ENCODE measurements at regions of chr6 and their contacts with region 1.

Region 1: GRCh38 chr6:26156076-26156849 is 69.0 kb downstream of the HFE start:
- DNase-seq: peak; percentile 90
- H3K4me3 Mint-ChIP-seq: peak overlapping the region; percentile 92
- H3K27ac Mint-ChIP-seq: peak overlapping the region; percentile 97
- H3K4me1 Mint-ChIP-seq: peaks cover 39% of the 10 kb centered on the region
- H3K27me3 Mint-ChIP-seq: peaks cover 3% of the 10 kb centered on the region

Region 2: GRCh38 chr6:25899123-25899522 is 257.1 kb before region 1 on chr6:
- CTCF ChIA-PET with region 1: no interaction called
- POLR2A ChIA-PET with region 1: no interaction called
- DNase-seq: no peak
- H3K4me3 Mint-ChIP-seq: no peak overlapping the region
- H3K27ac Mint-ChIP-seq: no peak overlapping the region
- H3K4me1 Mint-ChIP-seq: no peaks in the 10 kb centered on the region
- H3K27me3 Mint-ChIP-seq: no peaks in the 10 kb centered on the region

Region 3: GRCh38 chr6:26025894-26026832 is 130.1 kb before region 1 on chr6:
- CTCF ChIA-PET with region 1: interaction called, 5 read pairs
- POLR2A ChIA-PET with region 1: interaction called, 45 read pairs
- DNase-seq: peak; percentile 96
- H3K4me3 Mint-ChIP-seq: peak overlapping the region; percentile 88
- H3K27ac Mint-ChIP-seq: peak overlapping the region; percentile 100
- H3K4me1 Mint-ChIP-seq: peaks cover 86% of the 10 kb centered on the region
- H3K27me3 Mint-ChIP-seq: peaks cover 3% of the 10 kb centered on the region

Region 4: DNA sequence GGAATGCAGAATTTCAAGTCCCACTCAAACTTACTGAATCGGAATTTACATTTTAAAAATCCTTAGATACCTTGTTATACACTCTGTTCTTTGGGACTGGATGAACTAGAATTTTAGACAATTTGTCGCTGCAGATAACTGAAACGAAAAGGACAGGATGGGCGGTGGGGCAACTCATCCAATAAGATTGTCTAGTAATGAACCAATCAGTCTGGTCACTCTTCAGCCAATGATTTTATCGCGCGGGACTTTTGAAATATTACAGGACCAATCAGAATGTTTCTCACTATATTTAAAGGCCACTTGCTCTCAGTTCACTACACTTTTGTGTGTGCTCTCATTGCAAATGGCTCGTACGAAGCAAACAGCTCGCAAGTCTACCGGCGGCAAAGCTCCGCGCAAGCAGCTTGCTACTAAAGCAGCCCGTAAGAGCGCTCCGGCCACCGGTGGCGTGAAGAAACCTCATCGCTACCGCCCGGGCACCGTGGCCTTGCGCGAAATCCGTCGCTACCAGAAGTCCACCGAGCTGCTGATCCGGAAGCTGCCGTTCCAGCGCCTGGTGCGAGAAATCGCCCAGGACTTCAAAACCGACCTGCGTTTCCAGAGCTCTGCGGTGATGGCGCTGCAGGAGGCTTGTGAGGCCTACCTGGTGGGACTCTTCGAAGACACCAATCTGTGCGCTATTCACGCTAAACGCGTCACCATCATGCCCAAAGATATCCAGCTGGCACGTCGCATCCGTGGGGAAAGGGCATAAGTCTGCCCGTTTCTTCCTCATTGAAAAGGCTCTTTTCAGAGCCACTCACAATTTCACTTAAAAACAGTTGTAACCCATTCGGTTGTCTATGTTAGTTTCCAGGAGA is 111.0 kb before region 1 on chr6:
- CTCF ChIA-PET with region 1: no interaction called
- POLR2A ChIA-PET with region 1: interaction called, 15 read pairs
- DNase-seq: peak; percentile 93
- H3K4me3 Mint-ChIP-seq: peak overlapping the region; percentile 83
- H3K27ac Mint-ChIP-seq: peak overlapping the region; percentile 99
- H3K4me1 Mint-ChIP-seq: peaks cover 44% of the 10 kb centered on the region
- H3K27me3 Mint-ChIP-seq: no peaks in the 10 kb centered on the region

Region 5: DNA sequence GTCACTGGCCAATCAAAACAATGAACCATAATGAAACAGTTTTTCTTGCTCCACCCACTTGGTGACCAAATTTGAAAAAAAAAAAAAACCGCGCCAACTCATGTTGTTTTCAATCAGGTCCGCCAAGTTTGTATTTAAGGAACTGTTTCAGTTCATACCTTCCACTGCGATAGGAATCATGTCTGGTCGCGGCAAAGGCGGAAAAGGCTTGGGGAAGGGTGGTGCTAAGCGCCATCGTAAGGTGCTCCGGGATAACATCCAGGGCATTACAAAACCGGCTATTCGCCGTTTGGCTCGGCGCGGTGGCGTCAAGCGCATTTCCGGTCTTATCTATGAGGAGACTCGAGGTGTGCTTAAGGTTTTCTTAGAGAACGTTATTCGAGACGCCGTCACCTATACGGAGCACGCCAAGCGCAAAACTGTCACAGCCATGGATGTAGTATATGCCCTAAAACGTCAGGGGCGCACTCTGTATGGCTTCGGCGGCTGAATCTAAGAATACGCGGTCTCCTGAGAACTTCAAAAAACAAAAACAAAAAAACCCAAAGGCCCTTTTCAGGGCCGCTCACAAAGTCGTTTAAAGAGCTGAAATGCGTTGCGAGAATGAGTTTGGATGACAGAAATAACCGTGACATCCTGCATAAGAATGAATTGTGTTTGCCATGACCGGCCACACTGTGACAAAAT is 52.4 kb before region 1 on chr6:
- CTCF ChIA-PET with region 1: interaction called, 4 read pairs
- POLR2A ChIA-PET with region 1: interaction called, 14 read pairs
- DNase-seq: peak; percentile 92
- H3K4me3 Mint-ChIP-seq: peak overlapping the region; percentile 84
- H3K27ac Mint-ChIP-seq: peak overlapping the region; percentile 99
- H3K4me1 Mint-ChIP-seq: peaks cover 25% of the 10 kb centered on the region
- H3K27me3 Mint-ChIP-seq: peaks cover 2% of the 10 kb centered on the region

Region 6: DNA sequence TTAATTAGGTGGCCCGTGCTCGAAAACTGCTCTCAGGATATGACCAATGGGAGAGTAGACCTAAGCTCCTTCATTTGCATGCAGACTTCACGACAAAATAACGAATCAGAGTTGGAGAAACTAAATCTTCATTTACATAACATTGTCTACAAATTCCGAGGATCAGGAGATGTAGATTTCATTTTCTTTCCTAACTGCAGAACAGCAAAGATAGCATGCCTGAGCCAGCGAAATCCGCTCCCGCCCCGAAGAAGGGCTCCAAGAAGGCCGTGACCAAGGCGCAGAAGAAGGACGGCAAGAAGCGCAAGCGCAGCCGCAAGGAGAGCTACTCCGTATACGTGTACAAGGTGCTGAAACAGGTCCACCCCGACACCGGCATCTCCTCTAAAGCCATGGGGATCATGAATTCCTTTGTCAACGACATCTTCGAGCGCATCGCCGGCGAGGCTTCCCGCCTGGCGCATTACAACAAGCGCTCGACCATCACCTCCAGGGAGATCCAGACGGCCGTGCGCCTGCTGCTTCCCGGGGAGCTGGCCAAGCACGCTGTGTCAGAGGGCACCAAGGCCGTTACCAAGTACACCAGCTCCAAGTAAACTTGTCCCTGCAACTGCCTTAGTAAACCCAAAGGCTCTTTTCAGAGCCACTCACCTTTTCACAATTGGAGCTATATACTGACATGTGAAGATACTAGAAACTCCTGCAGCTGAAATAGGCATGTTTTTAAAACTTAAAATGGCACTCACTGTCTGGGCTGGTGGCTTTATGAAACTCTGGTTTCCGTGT is 27.5 kb after region 1 on chr6:
- CTCF ChIA-PET with region 1: interaction called, 19 read pairs
- POLR2A ChIA-PET with region 1: interaction called, 47 read pairs
- DNase-seq: peak; percentile 75
- H3K4me3 Mint-ChIP-seq: peak overlapping the region; percentile 91
- H3K27ac Mint-ChIP-seq: peak overlapping the region; percentile 99
- H3K4me1 Mint-ChIP-seq: peaks cover 73% of the 10 kb centered on the region
- H3K27me3 Mint-ChIP-seq: no peaks in the 10 kb centered on the region

Region 7: DNA sequence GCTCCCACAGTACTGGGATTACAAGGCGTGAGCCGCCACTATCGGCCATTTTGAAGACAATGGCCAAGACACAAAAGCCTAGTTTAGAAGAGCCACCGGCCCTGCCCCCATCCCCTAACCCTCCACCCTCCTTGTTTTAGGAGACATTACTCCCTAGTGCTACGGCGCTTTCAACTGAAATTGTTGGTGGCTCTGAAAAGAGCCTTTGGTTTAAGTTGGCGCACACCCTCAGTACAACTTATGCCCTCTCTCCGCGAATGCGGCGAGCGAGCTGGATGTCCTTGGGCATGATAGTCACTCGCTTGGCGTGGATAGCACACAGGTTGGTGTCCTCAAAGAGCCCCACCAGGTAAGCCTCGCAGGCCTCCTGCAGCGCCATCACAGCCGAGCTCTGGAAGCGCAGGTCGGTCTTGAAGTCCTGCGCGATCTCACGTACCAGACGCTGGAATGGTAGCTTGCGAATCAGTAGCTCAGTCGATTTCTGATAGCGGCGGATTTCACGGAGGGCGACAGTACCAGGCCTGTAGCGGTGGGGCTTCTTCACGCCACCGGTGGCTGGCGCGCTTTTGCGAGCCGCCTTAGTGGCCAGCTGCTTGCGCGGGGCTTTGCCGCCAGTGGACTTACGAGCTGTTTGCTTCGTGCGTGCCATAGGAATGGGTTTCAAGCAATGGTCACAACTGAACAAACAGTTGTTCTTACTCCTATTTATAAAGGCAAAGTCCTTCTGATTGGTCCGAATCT is 93.9 kb after region 1 on chr6:
- CTCF ChIA-PET with region 1: interaction called, 6 read pairs
- POLR2A ChIA-PET with region 1: interaction called, 13 read pairs
- DNase-seq: peak; percentile 82
- H3K4me3 Mint-ChIP-seq: peak overlapping the region; percentile 98
- H3K27ac Mint-ChIP-seq: peak overlapping the region; percentile 100
- H3K4me1 Mint-ChIP-seq: peaks cover 40% of the 10 kb centered on the region
- H3K27me3 Mint-ChIP-seq: no peaks in the 10 kb centered on the region

Region 8: DNA sequence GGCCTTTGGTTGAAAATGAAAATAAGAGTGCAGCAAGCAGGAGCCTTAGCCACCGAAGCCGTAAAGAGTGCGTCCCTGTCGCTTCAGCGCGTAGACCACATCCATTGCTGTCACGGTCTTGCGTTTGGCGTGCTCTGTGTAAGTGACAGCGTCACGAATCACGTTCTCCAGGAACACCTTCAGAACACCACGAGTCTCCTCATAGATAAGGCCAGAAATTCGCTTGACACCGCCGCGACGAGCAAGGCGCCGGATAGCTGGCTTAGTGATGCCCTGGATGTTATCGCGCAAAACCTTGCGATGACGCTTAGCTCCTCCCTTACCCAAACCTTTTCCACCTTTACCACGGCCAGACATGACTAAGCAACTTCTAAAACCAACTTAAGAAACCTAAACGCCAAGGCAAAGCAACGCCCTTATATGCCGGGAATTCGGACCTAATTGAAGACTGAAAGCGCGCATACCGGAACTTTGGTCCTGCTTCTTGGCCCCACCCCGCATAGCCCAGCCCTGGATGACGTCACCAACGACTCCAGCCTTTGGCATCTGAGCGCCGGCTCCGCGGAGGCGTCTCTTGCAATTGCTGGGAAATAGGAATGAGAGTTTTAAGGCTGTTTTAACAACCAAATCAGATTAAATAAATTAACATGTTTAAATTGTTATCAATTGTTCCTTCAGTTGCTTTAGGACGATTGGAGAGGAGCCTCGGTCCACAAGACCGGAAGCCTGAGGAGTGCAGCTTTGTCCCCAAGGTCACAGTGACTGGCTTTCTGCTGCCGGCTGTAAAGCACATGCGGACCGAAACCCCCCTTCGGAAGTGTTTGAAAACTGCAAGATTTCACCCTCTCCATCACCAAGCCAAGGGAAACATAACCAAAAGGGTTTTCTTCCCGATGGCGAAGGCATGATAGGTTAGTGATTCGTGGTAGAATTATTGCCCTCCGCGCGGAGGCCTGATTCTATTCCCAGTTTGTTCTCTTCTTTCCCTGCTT is 129.2 kb after region 1 on chr6:
- CTCF ChIA-PET with region 1: no interaction called
- POLR2A ChIA-PET with region 1: interaction called, 13 read pairs
- DNase-seq: peak; percentile 99
- H3K4me3 Mint-ChIP-seq: peak overlapping the region; percentile 92
- H3K27ac Mint-ChIP-seq: peak overlapping the region; percentile 100
- H3K4me1 Mint-ChIP-seq: peaks cover 38% of the 10 kb centered on the region
- H3K27me3 Mint-ChIP-seq: peaks cover 2% of the 10 kb centered on the region